Kidney (tissue), 22 donors: ENCODE measurements at regions of chr5 and their contacts with region 1.

Region 1: GRCh38 chr5:64634997-64635686 is 55.2 kb upstream of the SHISAL2B start:
- DNase-seq: peak in 2 of 5 donors; percentile 31 to 53
- H3K4me3 ChIP-seq: no peak overlapping the region
- H3K27ac ChIP-seq: no peak overlapping the region
- H3K4me1 ChIP-seq: peaks cover 0 to 2% (median 0%) of the 10 kb centered on the region in 3 donors
- H3K27me3 ChIP-seq: no peaks in the 10 kb centered on the region
- CTCF ChIP-seq: peak; percentile 58

Region 2: DNA sequence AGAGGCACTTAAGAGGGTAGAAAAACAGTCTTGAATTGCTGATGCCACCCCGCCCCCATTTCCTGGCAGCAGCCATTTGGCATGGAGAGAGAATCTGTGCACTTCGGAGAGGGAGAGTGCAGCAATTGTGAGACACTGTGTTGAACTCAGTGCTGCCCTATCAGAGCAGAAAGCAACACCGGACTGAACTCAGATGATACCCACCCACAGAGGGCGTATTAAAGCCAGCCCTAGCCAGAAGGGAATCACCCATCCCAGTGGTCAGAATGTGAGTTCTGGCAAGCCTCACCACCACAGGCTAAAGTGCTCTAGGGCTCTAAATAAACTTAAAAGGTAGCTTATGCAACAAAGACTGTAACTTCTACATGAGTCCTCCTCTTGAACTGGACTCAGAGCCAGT is 217.8 kb before region 1 on chr5:
- intact Hi-C with region 1: no loop called
- DNase-seq: no peak
- H3K4me3 ChIP-seq: no peak overlapping the region
- H3K27ac ChIP-seq: no peak overlapping the region
- H3K4me1 ChIP-seq: no peaks in the 10 kb centered on the region
- H3K27me3 ChIP-seq: no peaks in the 10 kb centered on the region
- CTCF ChIP-seq: no peak

Region 3: GRCh38 chr5:64784451-64785025 is 149.4 kb after region 1 on chr5:
- intact Hi-C with region 1: loop called (anchors 5 kb)
- DNase-seq: peak; percentile 49 to 93 (median 71)
- H3K4me3 ChIP-seq: no peak overlapping the region
- H3K27ac ChIP-seq: no peak overlapping the region
- H3K4me1 ChIP-seq: no peaks in the 10 kb centered on the region
- H3K27me3 ChIP-seq: no peaks in the 10 kb centered on the region
- CTCF ChIP-seq: peak; percentile 80